Activated CD4-positive, alpha-beta T cell treated with anti-CD3 and anti-CD28 coated beads for 36 hours (primary cell): ENCODE measurements at regions of chr10 and their contacts with region 1.

Region 1: DNA sequence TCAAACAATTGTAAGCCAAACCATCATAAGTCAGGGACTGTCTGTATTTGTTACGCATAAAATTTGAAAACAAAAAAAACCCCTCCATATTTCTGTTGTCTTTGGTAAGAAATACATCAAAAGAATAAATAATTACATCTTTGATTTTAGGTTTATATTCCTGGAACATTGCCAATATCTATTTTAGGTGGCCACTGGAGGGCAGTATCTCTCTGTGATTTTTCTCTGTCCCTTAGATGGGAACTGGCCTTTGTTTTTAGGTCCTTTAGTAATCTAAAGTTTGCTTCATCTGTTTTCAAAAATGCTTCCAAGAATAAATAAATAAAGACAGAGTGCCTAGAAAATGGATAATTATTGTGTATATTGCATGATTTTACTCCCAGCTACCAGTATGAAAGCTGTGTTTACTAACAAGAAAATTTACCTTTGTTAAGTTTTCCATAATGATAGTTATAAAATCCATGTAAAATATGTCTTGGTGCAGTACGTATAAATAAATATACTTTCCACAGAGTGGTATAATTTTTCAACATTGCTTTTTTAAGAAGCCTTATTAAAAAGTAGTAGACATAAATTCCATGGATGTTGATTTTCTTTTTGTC is 64.2 kb downstream of the PHYHIPL start:
- DNase-seq: peak; percentile 4
- ATAC-seq: no peak
- H3K4me3 Mint-ChIP-seq: no peak overlapping the region
- H3K27ac Mint-ChIP-seq: no peak overlapping the region
- H3K4me1 Mint-ChIP-seq: no peaks in the 10 kb centered on the region
- H3K27me3 Mint-ChIP-seq: peaks cover 5% of the 10 kb centered on the region

Region 2: GRCh38 chr10:58781873-58782488 is 458.7 kb before region 1 on chr10:
- CTCF ChIA-PET with region 1: no interaction called
- POLR2A ChIA-PET with region 1: no interaction called
- intact Hi-C with region 1: loop called in 1 of 2 experiments (anchors 5 kb)
- DNase-seq: no peak
- ATAC-seq: no peak
- H3K4me3 Mint-ChIP-seq: no peak overlapping the region
- H3K27ac Mint-ChIP-seq: no peak overlapping the region
- H3K4me1 Mint-ChIP-seq: no peaks in the 10 kb centered on the region
- H3K27me3 Mint-ChIP-seq: peaks cover 7% of the 10 kb centered on the region

Region 3: DNA sequence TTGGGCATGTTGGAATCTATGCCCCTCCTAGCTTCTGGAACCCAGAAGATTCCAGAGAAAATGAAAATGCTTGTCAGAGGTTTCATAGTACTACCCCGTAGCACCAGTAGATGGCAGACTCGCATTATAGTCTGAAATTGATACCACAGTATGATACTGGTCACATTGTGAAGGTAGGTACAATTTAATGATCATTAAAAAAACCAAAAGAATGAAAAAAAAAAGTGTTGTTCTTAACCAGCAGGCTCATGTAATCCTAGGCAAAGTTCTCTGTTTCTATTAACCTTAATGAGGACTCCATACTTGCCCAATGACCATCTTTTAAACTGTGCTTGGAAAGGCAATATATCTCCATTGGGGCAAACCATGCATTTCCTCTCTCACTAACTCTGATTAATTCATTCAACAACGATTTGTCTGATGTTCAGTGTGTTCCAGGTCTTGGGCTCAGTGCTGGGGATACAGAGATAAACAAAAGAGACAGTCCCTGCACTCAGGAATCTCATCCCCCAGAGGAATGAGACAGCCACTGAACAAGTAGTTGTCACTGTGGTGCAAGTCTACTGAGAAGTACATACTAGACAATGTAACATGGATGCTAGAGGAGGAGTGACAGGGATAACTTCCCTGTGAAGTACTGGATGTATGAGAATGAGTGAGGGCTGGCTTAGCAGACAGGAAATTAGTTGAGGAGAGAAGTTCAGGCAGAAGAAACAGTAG is 287.8 kb before region 1 on chr10:
- CTCF ChIA-PET with region 1: no interaction called
- POLR2A ChIA-PET with region 1: no interaction called
- intact Hi-C with region 1: loop called in 1 of 2 experiments (anchors 1 kb)
- DNase-seq: peak; percentile 29
- ATAC-seq: no peak
- H3K4me3 Mint-ChIP-seq: no peak overlapping the region
- H3K27ac Mint-ChIP-seq: no peak overlapping the region
- H3K4me1 Mint-ChIP-seq: no peaks in the 10 kb centered on the region
- H3K27me3 Mint-ChIP-seq: peaks cover 3% of the 10 kb centered on the region

Region 4: DNA sequence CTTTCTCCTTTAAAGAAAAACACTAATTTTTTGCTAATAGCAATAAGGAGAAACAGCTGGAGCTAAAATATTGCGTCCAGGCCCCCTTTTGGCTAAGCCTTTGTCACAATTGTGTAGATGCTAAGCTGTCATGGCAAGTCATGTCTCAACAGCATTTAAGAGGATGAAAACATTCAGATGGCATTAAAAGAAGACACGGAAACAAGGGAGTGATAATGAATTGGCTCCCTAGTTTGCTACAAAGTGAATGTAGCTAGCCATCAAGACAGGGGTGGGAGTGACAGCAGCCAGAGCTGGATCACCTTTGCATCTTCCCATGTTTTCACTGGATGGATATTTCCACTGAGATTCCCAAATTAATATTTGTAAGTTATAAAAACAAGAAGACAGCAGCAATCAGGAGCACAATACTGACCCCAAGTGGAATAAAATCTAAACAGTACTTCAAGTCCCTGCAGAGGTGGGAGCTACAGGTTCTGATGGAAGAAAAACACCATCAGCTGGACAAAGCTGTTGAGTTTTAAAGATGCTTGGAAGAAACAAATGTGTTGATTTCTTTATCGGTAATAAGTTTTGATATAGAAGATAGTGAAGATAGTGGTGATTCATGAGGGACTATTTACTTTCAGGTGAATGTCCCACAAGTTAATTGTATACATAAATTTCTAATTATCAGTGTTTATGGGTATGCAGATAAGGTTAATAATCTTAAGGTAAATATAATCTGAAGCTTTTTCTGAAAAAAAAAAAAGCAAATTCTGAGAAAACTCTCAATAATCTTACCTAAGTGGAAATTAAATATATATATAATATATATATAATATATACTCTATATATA is 339.6 kb after region 1 on chr10:
- CTCF ChIA-PET with region 1: no interaction called
- POLR2A ChIA-PET with region 1: no interaction called
- intact Hi-C with region 1: loop called (anchors 1 to 2 kb)
- DNase-seq: no peak
- ATAC-seq: no peak
- H3K4me3 Mint-ChIP-seq: no peak overlapping the region
- H3K27ac Mint-ChIP-seq: no peak overlapping the region
- H3K4me1 Mint-ChIP-seq: no peaks in the 10 kb centered on the region
- H3K27me3 Mint-ChIP-seq: peaks cover 9% of the 10 kb centered on the region

Region 5: DNA sequence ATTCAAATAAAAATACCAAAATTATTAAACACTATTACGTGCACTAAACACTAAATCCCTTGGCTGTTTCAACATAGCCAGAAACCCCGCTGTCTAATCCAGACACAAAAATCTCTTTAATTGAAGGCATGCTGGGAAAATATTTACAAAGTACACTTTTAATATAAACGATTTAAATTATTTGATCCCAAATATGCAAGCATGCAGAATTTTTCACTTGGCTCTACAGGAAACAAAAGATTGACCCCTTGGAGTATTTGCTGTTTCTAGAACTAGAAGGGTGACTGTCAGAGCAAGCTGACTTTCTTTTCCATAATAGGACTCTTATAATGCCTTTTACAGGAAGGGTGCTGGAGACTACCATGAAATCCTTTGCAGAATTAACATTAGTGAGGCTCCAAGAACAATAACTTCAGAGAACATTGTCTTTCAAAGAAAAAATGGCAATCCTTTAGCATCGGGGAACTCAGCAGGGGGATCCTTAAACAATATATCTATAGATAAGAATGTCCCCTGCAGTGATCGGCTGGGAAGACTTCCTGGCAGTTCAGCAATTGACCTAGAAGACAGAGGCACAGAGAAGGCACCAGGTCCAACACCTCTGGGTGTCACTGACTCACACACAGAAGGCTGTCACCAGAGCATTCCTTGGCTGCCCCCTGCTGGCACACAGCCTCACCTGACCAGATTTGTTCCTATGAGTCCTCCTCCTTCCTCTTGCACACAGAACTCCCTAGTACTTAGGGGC is 568.4 kb after region 1 on chr10:
- CTCF ChIA-PET with region 1: no interaction called
- POLR2A ChIA-PET with region 1: no interaction called
- intact Hi-C with region 1: loop called in 1 of 2 experiments (anchors 2 kb)
- DNase-seq: peak; percentile 88
- ATAC-seq: peak; percentile 98
- H3K4me3 Mint-ChIP-seq: no peak overlapping the region
- H3K27ac Mint-ChIP-seq: no peak overlapping the region
- H3K4me1 Mint-ChIP-seq: no peaks in the 10 kb centered on the region
- H3K27me3 Mint-ChIP-seq: no peaks in the 10 kb centered on the region